ENCODE measurements at regions of chr12 and their contacts with region 1.

Region 1: DNA sequence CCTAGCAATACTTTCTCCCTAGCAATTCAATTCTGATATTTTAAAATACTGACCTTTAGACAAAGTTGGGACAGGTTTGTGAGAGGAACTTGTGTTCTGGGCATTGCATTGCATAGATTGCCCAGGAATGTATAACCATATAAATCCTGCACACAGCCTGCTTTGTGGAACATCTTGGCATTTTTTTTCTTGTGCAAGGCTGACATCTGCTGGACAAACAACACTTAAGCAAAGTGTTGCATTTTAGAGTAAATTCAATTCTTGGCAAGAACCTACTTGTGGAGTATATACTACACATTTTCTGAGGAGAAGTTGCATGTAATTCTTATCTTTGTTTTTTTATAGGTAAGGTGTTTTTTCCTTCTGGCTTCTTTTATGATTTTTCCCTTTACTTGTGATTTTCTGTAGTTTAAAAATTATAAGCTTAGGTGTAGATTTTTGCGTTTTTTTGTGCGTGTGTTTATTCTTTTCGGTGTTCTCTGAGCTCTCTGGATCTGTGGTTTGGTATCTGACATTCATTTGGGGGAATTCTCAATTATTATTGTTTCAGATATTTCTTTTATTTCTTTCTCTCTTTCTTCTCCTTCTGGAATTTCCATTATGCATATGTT is 26.4 kb downstream of the TESPA1 start:
- DNase-seq: peak; percentile 87
- ATAC-seq: peak; percentile 81
- H3K4me3 ChIP-seq: no peak overlapping the region
- H3K27ac ChIP-seq: no peak overlapping the region
- H3K4me1 ChIP-seq: peaks cover 16% of the 10 kb centered on the region
- H3K27me3 ChIP-seq: peaks cover 10% of the 10 kb centered on the region
- CTCF ChIP-seq: peak; percentile 86

Region 2: GRCh38 chr12:54701940-54702592 is 256.1 kb before region 1 on chr12:
- CTCF ChIA-PET with region 1: interaction called, 3 read pairs
- POLR2A ChIA-PET with region 1: no interaction called
- intact Hi-C with region 1: loop called (anchors 1 kb)
- DNase-seq: peak; percentile 61
- ATAC-seq: peak; percentile 75
- H3K4me3 ChIP-seq: no peak overlapping the region
- H3K27ac ChIP-seq: no peak overlapping the region
- H3K4me1 ChIP-seq: no peaks in the 10 kb centered on the region
- H3K27me3 ChIP-seq: peaks cover 65% of the 10 kb centered on the region
- CTCF ChIP-seq: peak; percentile 70

Region 3: DNA sequence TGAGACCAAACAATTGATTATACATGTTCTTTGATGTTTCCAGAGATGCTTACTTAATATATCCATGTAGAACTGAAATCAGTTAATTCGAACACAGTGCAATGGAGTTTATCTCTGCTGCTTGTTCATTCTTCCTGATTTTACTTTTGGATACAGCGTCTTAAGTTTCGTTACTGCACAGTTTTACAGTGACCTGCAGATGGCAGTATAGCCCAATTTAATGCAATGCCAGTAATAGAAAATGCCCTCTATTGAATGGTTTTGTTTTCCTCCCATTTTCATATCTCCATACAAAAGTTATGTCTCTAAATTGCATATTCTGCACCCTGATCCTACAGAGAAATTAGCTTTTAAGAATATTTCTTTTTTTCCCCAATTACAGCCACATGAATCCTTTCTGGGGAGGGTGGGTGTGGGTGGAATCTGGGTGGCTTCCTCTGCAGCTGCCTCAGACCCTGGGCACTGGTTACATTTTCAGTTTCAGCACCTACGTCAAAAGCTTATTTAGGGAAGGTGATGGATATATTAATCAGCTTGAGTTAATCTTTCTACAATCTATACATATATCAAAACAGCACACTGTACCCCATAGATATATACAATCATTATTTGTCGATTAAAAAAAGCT is 208.8 kb before region 1 on chr12:
- CTCF ChIA-PET with region 1: no interaction called
- POLR2A ChIA-PET with region 1: no interaction called
- intact Hi-C with region 1: loop called (anchors 1 kb)
- DNase-seq: peak; percentile 65
- ATAC-seq: peak; percentile 73
- H3K4me3 ChIP-seq: no peak overlapping the region
- H3K27ac ChIP-seq: no peak overlapping the region
- H3K4me1 ChIP-seq: no peaks in the 10 kb centered on the region
- H3K27me3 ChIP-seq: peaks cover 12% of the 10 kb centered on the region; the same call in 1 of the 2 replicates
- CTCF ChIP-seq: peak; percentile 88

Region 4: DNA sequence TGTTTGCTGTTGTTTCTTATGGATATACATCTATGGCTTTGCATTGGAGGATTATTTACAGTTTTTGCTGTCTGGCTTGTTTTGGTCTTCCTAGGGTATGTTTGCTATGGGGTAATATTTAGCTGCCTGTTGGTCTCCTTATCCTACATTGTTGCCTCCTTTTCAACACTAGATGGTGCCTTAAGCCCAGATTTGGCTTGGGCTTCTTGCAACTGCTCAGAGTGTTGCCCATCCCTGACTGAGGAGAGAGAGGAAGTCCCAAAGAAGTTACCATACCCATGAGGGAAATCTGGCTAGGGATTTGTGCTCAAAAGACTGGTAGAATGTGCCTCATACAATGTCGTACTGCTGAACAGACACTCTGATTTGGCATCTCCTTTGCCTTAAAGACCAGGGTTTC is 198.4 kb before region 1 on chr12:
- CTCF ChIA-PET with region 1: interaction called, 8 read pairs
- POLR2A ChIA-PET with region 1: no interaction called
- intact Hi-C with region 1: loop called (anchors 1 kb)
- DNase-seq: peak; percentile 73
- ATAC-seq: peak; percentile 92
- H3K4me3 ChIP-seq: no peak overlapping the region
- H3K27ac ChIP-seq: no peak overlapping the region
- H3K4me1 ChIP-seq: no peaks in the 10 kb centered on the region
- H3K27me3 ChIP-seq: peaks cover 28% of the 10 kb centered on the region
- CTCF ChIP-seq: peak; percentile 80

Region 5: GRCh38 chr12:54853995-54854566 is 104.1 kb before region 1 on chr12 and contains the start of gene MUCL1:
- CTCF ChIA-PET with region 1: interaction called, 5 read pairs
- POLR2A ChIA-PET with region 1: no interaction called
- intact Hi-C with region 1: loop called (anchors 1 kb)
- DNase-seq: peak; percentile 93
- ATAC-seq: peak; percentile 99
- H3K4me3 ChIP-seq: no peak within 1 kb of the TSS
- H3K27ac ChIP-seq: no peak within 1 kb of the TSS
- H3K4me1 ChIP-seq: no peaks in the 10 kb centered on the region
- H3K27me3 ChIP-seq: 0 out of 2 replicates have a peak, but pooled peaks cover under 1% of the 10 kb centered on the region
- CTCF ChIP-seq: peak; percentile 97
- total RNA-seq, gene MUCL1: not detected in 2 replicates

Region 6: GRCh38 chr12:54984658-54985376 is 26.7 kb after region 1 on chr12 and contains the start of gene TESPA1:
- CTCF ChIA-PET with region 1: no interaction called
- POLR2A ChIA-PET with region 1: no interaction called
- intact Hi-C with region 1: no loop called
- DNase-seq: no peak
- ATAC-seq: no peak
- H3K4me3 ChIP-seq: no peak within 1 kb of the TSS
- H3K27ac ChIP-seq: no peak within 1 kb of the TSS
- H3K4me1 ChIP-seq: no peaks in the 10 kb centered on the region
- H3K27me3 ChIP-seq: peaks cover 89% of the 10 kb centered on the region
- CTCF ChIP-seq: no peak
- total RNA-seq, gene TESPA1: not detected in 2 replicates

Region 7: DNA sequence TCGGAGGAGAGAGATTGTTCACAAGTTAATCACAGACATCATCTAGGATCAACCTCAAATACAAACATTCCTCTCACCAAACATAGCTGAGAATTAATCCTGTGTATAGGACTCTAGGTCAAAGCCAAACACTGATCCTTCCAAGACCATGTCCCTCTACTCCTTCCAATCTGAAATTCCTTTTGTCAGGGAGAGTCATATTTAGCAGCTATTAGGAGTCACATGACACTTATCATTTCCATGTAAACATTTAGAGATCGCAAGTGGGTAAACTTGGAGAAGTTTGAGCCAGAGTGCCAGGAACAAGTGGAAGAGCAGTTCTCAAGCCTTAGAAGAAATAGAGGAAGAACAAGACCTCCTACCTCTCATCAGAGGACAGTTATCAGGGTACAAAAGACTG is 627.7 kb after region 1 on chr12:
- CTCF ChIA-PET with region 1: no interaction called
- POLR2A ChIA-PET with region 1: no interaction called
- intact Hi-C with region 1: no loop called
- DNase-seq: no peak
- ATAC-seq: no peak
- H3K4me3 ChIP-seq: no peak overlapping the region
- H3K27ac ChIP-seq: no peak overlapping the region
- H3K4me1 ChIP-seq: no peaks in the 10 kb centered on the region
- H3K27me3 ChIP-seq: no peaks in the 10 kb centered on the region
- CTCF ChIP-seq: no peak